Left ventricle myocardium superior (tissue), 1 donor: ENCODE measurements at regions of chr6 and their contacts with region 1.

Region 1: GRCh38 chr6:137707590-137708360 is 159.3 kb upstream of the TNFAIP3 start:
- DNase-seq: peak; percentile 36
- ATAC-seq: peak; percentile 60

Region 2: DNA sequence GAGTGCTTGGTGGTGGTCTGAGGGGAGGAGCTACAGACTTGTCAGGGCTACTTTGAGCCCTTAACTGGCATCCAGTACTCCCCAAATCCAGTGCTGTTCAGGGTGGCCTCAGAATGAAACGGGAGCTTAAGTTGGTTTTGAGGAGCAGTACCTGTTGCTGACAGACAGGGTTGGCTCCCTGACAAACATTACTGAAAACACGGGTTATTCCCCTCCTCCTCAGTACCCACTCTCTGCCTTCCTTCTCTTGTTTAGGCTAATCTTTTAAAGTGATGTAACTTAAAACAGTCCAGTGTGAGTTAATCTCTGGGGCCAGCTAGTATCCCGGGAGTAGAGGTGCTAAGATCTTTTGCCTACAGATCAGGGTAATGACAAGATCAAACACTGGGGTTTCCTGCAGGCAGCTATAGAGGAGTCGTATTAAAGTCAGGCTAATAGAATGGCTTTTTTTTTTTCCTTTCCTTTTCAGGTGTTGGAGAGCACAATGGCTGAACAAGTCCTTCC is 163.0 kb after region 1 on chr6:
- intact Hi-C with region 1: loop called (anchors 2 kb)
- DNase-seq: no peak
- ATAC-seq: no peak

Region 3: GRCh38 chr6:137944793-137945498 is 237.2 kb after region 1 on chr6:
- intact Hi-C with region 1: loop called (anchors 5 kb)
- DNase-seq: no peak
- ATAC-seq: peak; percentile 84